Colonic mucosa (tissue), 4 donors: ENCODE measurements at regions of chr3 and their contacts with region 1.

Region 1: DNA sequence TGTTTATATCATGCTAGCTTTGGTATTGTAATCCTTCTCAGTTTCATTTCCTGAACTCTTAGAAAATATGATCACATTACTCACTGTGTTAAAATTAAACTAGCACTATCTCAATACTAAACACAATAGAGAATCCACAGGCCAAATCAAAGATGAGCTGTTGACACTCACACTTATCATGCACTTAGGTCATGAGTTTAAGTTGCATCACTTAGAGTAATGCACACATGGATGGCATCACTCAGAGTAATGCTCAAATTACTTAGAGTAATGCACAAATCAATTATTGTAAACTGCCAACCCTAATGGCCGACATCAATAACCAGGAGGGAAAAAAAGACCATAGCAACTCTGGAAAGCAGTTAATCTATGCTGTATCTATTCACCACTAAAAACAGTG is 40.0 kb upstream of the MCF2L2 start:
- DNase-seq: no peak
- H3K4me3 ChIP-seq: no peak overlapping the region
- H3K27ac ChIP-seq: no peak overlapping the region
- H3K4me1 ChIP-seq: no peaks in the 10 kb centered on the region
- H3K27me3 ChIP-seq: no peaks in the 10 kb centered on the region
- CTCF ChIP-seq: no peak

Region 2: DNA sequence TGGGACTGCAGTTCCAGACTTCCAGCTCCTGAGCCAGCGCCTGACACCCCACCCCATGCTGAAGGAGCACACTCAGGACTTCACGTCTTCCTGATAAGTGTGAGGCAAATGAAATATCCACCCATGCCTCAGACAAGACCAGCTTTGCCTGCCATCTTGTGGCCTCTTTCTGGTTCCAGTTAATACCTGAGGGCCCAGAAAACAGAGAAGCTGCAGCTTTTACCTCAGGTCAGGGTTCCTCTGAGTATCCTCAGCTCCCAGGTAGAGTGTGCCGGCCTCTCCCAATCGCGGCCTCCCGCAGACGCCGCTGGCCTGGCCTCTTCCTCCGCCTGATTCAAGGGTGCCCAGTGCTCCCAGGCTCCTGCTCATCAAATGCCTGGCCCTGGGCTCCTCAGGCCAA is 92.2 kb after region 1 on chr3:
- intact Hi-C with region 1: loop called (anchors 5 kb)
- DNase-seq: peak; percentile 41
- H3K4me3 ChIP-seq: no peak overlapping the region
- H3K27ac ChIP-seq: no peak overlapping the region
- H3K4me1 ChIP-seq: no peaks in the 10 kb centered on the region
- H3K27me3 ChIP-seq: no peaks in the 10 kb centered on the region
- CTCF ChIP-seq: no peak

Region 3: DNA sequence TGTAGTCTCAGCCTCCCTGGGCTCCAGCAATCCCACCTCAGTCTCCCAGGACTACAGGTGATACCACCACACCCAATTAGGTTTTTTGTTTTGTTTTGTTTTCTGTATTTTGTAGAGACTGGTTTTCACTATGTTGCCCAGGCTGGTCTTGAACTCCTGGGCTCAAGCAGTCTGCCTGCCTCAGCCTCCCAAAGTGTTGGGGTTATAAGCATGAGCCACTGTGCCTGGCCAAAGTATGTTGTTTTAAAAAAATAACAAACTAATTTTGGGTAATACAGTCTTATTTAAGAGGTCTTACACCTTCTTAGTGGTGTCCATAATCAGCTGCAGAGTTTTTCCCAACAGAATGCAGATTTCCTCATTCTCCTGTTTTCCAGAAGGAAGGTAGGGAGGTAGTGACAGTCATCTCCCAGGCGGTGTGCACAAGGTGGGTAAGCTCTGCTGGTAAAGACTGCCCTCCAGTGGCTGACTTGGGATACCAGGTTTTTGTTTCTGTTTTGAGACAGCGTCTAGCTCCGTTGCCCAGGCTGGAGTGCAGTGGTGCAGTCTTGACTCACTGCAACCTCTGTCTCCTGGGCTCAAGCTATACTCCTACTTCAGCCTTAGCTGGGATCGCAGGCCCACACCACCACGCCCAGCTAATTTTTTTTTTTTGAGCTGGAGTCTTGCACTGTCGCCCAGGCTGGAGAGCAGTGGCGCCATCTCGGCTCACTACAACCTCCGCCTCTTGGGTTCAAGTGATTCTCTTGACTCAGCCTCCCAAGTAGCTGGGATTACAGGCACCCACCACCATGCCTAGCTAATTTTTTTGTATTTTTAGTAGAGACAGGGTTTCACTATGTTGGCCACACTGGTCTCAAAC is 298.6 kb after region 1 on chr3:
- intact Hi-C with region 1: loop called (anchors 5 kb)
- DNase-seq: peak; percentile 82
- H3K4me3 ChIP-seq: no peak overlapping the region
- H3K27ac ChIP-seq: no peak overlapping the region
- H3K4me1 ChIP-seq: no peaks in the 10 kb centered on the region
- H3K27me3 ChIP-seq: no peaks in the 10 kb centered on the region
- CTCF ChIP-seq: peak; percentile 71